Left ventricle myocardium superior (tissue), 1 donor: ENCODE measurements at regions of chr1 and their contacts with region 1.

Region 1: DNA sequence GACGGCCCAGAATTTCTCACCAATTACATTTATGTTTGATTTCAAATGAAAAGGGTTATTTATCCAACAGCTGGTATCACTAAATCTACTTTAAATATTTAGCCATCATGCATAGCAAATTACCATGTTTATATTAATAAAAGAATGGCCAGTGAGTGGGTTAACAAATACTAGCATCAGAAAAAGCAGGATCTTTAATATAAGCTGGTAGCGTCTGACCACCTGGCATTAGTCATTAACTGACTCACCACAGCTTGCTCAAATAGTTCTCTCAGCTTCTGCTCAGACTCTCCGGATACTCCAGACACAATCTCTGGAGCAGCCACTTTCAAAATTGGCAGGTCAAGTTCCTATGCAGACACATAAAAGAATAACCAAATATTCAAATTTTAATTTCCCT is 29.7 kb downstream of the NVL start:
- DNase-seq: no peak
- ATAC-seq: no peak

Region 2: GRCh38 chr1:224392411-224393249 is 92.3 kb after region 1 on chr1:
- intact Hi-C with region 1: loop called (anchors 10 kb)
- DNase-seq: no peak
- ATAC-seq: no peak